ENCODE measurements at regions of chr20 and their contacts with region 1.

Region 1: GRCh38 chr20:31751126-31751525 is 12.0 kb downstream of the TPX2 start:
- DNase-seq: no peak
- H3K4me3 ChIP-seq: no peak overlapping the region
- H3K27ac ChIP-seq: no peak overlapping the region
- H3K4me1 ChIP-seq: no peaks in the 10 kb centered on the region
- H3K27me3 ChIP-seq: no peaks in the 10 kb centered on the region
- CTCF ChIP-seq: no peak

Region 2: DNA sequence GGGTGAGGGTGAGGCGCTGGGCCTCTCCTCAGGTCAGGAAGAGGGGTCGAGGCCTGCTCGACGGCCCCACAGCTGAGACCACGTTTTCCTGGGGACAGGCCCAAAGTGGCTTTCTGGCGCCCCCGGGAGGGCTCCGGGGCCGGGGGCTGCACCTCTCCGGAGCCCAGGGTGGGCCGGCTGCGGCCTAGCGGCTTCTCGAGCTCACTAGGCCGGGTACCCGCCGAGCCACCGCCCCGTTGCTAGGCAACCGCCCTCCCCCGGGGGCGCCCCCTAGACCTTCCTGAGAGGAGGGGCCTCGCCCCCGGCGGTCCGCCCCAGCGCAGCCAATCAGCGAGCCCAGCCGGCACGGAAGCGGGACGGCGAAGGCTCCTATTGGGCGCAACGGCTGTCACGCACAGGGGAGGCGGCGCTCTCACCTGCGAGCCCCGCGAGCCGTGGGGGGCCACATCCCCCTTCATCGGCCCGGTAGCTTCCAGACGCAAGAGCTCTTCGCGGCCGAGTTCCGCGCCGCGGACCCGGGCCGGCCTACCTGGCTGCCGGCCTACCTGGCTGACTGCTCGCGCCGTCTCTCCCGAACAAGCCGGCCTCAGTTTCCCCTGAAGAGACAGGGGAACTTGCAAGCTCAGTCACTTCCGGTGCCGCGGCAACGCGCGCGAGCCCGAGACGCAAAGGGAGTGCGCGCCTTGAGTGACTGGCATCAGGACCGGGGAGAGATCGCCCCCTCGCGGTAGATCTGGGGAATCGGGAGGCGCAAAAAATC is 27.6 kb before region 1 on chr20:
- CTCF ChIA-PET with region 1: no interaction called
- dilution Hi-C with region 1: no loop called
- in situ Hi-C with region 1: no loop called
- intact Hi-C with region 1: no loop called
- DNase-seq: peak; percentile 96
- H3K4me3 ChIP-seq: peak overlapping the region; percentile 78 to 89 (median 86)
- H3K27ac ChIP-seq: peak overlapping the region; percentile 89
- H3K4me1 ChIP-seq: peaks cover 26% of the 10 kb centered on the region
- H3K27me3 ChIP-seq: no peaks in the 10 kb centered on the region
- CTCF ChIP-seq: peak; percentile 89 to 93

Region 3: GRCh38 chr20:31788578-31788977 is 37.5 kb after region 1 on chr20:
- CTCF ChIA-PET with region 1: no interaction called
- dilution Hi-C with region 1: loop called (anchors 5 kb)
- in situ Hi-C with region 1: no loop called
- intact Hi-C with region 1: no loop called
- DNase-seq: peak; percentile 8
- H3K4me3 ChIP-seq: no peak overlapping the region
- H3K27ac ChIP-seq: no peak overlapping the region
- H3K4me1 ChIP-seq: no peaks in the 10 kb centered on the region
- H3K27me3 ChIP-seq: no peaks in the 10 kb centered on the region
- CTCF ChIP-seq: no peak

Region 4: GRCh38 chr20:31894980-31895675 is 144.0 kb after region 1 on chr20:
- CTCF ChIA-PET with region 1: no interaction called
- dilution Hi-C with region 1: no loop called
- in situ Hi-C with region 1: no loop called
- intact Hi-C with region 1: no loop called
- DNase-seq: peak; percentile 48
- H3K4me3 ChIP-seq: no peak overlapping the region
- H3K27ac ChIP-seq: no peak overlapping the region
- H3K4me1 ChIP-seq: no peaks in the 10 kb centered on the region
- H3K27me3 ChIP-seq: no peaks in the 10 kb centered on the region
- CTCF ChIP-seq: no peak

Region 5: DNA sequence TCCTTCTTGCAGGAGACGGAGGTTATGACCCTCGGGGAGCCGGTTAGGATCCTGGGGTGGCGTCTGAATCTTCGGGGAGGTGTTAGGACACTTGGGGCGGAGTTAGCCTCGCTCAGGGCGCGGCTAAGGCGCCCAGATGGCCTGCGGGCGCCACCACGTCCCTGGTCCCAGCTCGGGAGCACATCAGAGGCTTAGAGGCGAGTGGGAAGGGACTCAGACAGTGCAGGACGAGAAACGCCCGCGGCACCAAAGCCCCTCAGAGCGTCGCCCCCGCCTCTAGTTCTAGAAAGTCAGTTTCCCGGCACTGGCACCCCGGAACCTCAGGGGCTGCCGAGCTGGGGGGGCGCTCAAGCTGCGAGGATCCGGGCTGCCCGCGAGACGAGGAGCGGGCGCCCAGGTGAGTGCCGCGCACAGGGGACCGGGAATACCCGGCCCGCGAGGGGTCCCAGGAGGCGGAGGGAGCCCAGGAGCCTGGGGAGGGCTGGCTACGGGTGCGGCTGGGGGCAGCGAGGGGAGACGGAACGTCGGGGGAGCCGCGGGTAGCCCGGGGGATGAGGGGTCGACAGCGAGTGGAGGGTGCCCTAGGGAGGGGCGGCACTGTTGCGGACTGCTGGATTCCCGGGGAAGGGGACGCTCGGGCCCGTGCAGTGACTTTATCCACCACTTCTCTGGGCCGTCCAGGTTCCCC is 301.1 kb after region 1 on chr20 and contains the start of gene HCK:
- CTCF ChIA-PET with region 1: no interaction called
- dilution Hi-C with region 1: no loop called
- in situ Hi-C with region 1: no loop called
- intact Hi-C with region 1: no loop called
- DNase-seq: no peak
- H3K4me3 ChIP-seq: peak within 1 kb of the TSS in 1 of 3 experiments; percentile 4
- H3K27ac ChIP-seq: no peak within 1 kb of the TSS
- H3K4me1 ChIP-seq: peaks cover 5% of the 10 kb centered on the region
- H3K27me3 ChIP-seq: peaks cover 24% of the 10 kb centered on the region
- CTCF ChIP-seq: no peak
- total RNA-seq, gene HCK: not detected